ENCODE measurements at regions of chr1 and their contacts with region 1.

Region 1: GRCh38 chr1:64136752-64137411 is 66.5 kb upstream of the UBE2U start:
- DNase-seq: peak; percentile 63 to 80
- ATAC-seq: peak; percentile 89 to 96 (median 90)
- H3K4me3 ChIP-seq: no peak overlapping the region
- H3K27ac ChIP-seq: no peak overlapping the region
- H3K4me1 ChIP-seq: no peaks in the 10 kb centered on the region
- H3K27me3 ChIP-seq: no peaks in the 10 kb centered on the region
- CTCF ChIP-seq: peak; percentile 96

Region 2: DNA sequence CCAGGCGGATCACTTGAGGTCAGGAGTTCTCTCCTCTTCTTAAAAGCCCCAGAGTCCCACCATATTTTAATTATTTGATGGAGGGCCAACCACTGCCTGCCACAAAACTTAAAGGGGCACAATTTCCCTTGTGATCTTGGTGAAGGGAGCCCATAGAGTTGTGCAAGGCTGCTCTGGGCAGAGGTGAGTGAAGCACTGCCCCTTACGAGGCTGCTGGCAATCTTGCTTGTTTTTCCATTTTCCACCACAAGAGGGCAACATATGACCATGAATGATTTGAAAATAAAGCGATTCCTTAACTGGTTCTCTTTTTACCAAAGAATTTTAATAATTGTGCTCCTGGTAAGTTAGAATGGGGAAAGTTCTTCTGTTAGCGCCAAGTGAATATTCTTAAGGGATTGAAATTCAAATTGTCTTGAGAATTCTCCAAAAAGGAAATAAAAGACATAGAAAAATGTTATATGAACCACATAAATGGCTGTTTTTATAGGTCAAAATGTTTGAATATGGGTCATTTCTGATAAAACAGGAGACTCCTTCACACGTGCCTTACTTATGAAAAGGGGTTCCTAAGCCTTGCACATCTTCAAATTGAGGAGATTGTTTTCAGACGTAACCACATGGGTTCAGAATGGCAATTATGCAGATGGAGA is 521.0 kb before region 1 on chr1:
- intact Hi-C with region 1: loop called (anchors 5 kb)
- DNase-seq: peak; percentile 26 to 54
- ATAC-seq: peak; percentile 61 to 74 (median 68)
- H3K4me3 ChIP-seq: no peak overlapping the region
- H3K27ac ChIP-seq: peak overlapping the region; percentile 81
- H3K4me1 ChIP-seq: peaks cover 77% of the 10 kb centered on the region
- H3K27me3 ChIP-seq: no peaks in the 10 kb centered on the region
- CTCF ChIP-seq: peak; percentile 85

Region 3: DNA sequence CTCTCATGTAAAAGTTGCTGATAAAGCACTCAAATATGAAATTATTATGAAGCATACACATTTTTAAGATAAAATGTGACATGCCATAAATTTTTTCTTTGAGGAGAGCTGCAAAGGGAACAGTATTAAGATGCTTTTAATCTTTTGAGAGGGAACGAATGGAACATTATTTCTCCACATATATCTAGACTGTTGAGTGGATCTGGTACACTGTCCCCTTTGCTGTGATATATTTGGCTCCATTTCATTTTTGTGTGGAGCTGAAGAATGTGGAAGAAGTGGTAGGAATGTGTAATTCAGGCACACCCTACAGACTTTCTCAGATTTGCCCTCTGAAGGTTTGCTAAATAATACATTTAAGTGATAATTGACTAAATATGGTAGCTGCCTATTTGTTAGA is 512.0 kb before region 1 on chr1:
- intact Hi-C with region 1: loop called in 1 of 2 experiments (anchors 5 kb)
- DNase-seq: no peak
- ATAC-seq: no peak
- H3K4me3 ChIP-seq: peak overlapping the region; percentile 60
- H3K27ac ChIP-seq: peak overlapping the region; percentile 81
- H3K4me1 ChIP-seq: peaks cover 77% of the 10 kb centered on the region
- H3K27me3 ChIP-seq: no peaks in the 10 kb centered on the region
- CTCF ChIP-seq: peak; percentile 21

Region 4: DNA sequence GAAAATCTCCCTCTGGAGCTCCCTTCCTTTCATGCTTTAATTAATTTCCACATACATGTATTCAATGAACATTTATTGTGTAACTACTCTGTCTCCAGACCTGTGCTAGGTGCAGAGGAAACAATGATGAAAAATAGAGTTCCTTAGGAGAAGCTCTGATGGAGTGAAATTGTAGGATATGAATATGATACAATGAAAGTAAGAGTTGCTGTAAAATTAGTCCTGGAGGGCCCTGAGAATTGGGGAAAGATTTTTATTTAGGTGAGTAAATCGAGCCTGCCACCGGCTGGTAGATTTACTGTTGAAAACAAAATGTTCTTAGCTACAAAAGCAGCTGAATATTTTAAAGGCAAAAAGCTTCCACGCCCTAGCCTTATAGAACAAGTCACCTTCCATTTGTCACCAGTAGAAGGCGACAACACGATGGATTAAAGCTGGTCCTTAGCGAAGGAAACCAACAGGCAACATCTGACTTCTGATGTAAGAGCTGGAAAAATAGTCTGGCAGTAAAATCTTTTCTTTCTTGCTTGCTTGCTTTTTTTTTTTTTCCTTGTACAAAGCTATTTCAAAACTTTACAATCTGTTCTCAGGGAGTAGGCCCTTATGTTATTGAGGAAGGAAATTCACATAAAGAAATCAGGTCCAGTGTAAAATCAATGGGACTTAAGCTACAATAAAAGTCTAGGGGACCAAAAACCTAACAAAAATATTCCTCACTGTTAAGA is 445.0 kb before region 1 on chr1:
- intact Hi-C with region 1: loop called (anchors 5 kb)
- DNase-seq: no peak
- ATAC-seq: peak; percentile 83 to 98 (median 88)
- H3K4me3 ChIP-seq: no peak overlapping the region
- H3K27ac ChIP-seq: no peak overlapping the region
- H3K4me1 ChIP-seq: peaks cover 5% of the 10 kb centered on the region
- H3K27me3 ChIP-seq: no peaks in the 10 kb centered on the region
- CTCF ChIP-seq: peak; percentile 79

Region 5: GRCh38 chr1:63773815-63774616 is 362.9 kb before region 1 on chr1 and contains the start of gene ROR1:
- intact Hi-C with region 1: loop called (anchors 2 to 5 kb)
- DNase-seq: peak; percentile 88 to 93
- ATAC-seq: peak; percentile 98 to 99 (median 98)
- H3K4me3 ChIP-seq: peak within 1 kb of the TSS; percentile 83
- H3K27ac ChIP-seq: peak within 1 kb of the TSS; percentile 87
- H3K4me1 ChIP-seq: peaks cover 15% of the 10 kb centered on the region
- H3K27me3 ChIP-seq: peaks cover 0 to 7% (median 0%) of the 10 kb centered on the region in 3 donors
- CTCF ChIP-seq: peak; percentile 61
- total RNA-seq, gene ROR1: 1.2 to 2.8 (median 2.0) TPM

Region 6: GRCh38 chr1:63935143-63935542 is 201.7 kb before region 1 on chr1:
- intact Hi-C with region 1: loop called (anchors 5 to 10 kb)
- DNase-seq: no peak
- ATAC-seq: peak; percentile 78 to 94 (median 84)
- H3K4me3 ChIP-seq: no peak overlapping the region
- H3K27ac ChIP-seq: no peak overlapping the region
- H3K4me1 ChIP-seq: peaks cover 3% of the 10 kb centered on the region
- H3K27me3 ChIP-seq: no peaks in the 10 kb centered on the region
- CTCF ChIP-seq: peak; percentile 40

Region 7: GRCh38 chr1:64231153-64231552 is 94.3 kb after region 1 on chr1:
- intact Hi-C with region 1: no loop called
- DNase-seq: no peak
- ATAC-seq: no peak
- H3K4me3 ChIP-seq: no peak overlapping the region
- H3K27ac ChIP-seq: no peak overlapping the region
- H3K4me1 ChIP-seq: no peaks in the 10 kb centered on the region
- H3K27me3 ChIP-seq: no peaks in the 10 kb centered on the region
- CTCF ChIP-seq: no peak